Caco-2 (cell line): ENCODE measurements at regions of chr1 and their contacts with region 1.

Region 1: GRCh38 chr1:147185441-147185840 is 13.2 kb upstream of the PRKAB2 start:
- DNase-seq: peak in 1 of 2 experiments; percentile 46
- H3K4me3 ChIP-seq: no peak overlapping the region
- H3K4me3 Mint-ChIP-seq: no peak overlapping the region
- H3K27ac Mint-ChIP-seq: no peak overlapping the region
- H3K4me1 ChIP-seq: peaks cover 22% of the 10 kb centered on the region; the same call in 1 of the 2 replicates
- H3K4me1 Mint-ChIP-seq: peaks cover 16% of the 10 kb centered on the region
- H3K27me3 ChIP-seq: no peaks in the 10 kb centered on the region
- H3K27me3 Mint-ChIP-seq: no peaks in the 10 kb centered on the region
- CTCF ChIP-seq: no peak

Region 2: GRCh38 chr1:147172168-147172992 is 13.1 kb before region 1 on chr1 and contains the start of gene PRKAB2:
- CTCF ChIA-PET with region 1: no interaction called
- POLR2A ChIA-PET with region 1: no interaction called
- intact Hi-C with region 1: loop called (anchors 1 kb)
- DNase-seq: peak; percentile 96 to 98
- H3K4me3 ChIP-seq: peak within 1 kb of the TSS; percentile 98
- H3K4me3 Mint-ChIP-seq: peak within 1 kb of the TSS; percentile 96
- H3K27ac Mint-ChIP-seq: peak within 1 kb of the TSS; percentile 98
- H3K4me1 ChIP-seq: peaks cover 36% of the 10 kb centered on the region
- H3K4me1 Mint-ChIP-seq: peaks cover 34% of the 10 kb centered on the region
- H3K27me3 ChIP-seq: no peaks in the 10 kb centered on the region
- H3K27me3 Mint-ChIP-seq: no peaks in the 10 kb centered on the region
- CTCF ChIP-seq: peak; percentile 87 to 88
- total RNA-seq, gene PRKAB2: 30.1 and 31.5 TPM in 2 replicates

Region 3: GRCh38 chr1:147225193-147225730 is 39.8 kb after region 1 on chr1 and contains the start of gene FMO5:
- CTCF ChIA-PET with region 1: no interaction called
- POLR2A ChIA-PET with region 1: no interaction called
- intact Hi-C with region 1: loop called (anchors 2 kb)
- DNase-seq: peak; percentile 56 to 65
- H3K4me3 ChIP-seq: peak within 1 kb of the TSS; percentile 61
- H3K4me3 Mint-ChIP-seq: peak within 1 kb of the TSS; percentile 84
- H3K27ac Mint-ChIP-seq: peak within 1 kb of the TSS; percentile 53
- H3K4me1 ChIP-seq: no peaks in the 10 kb centered on the region
- H3K4me1 Mint-ChIP-seq: peaks cover 8% of the 10 kb centered on the region
- H3K27me3 ChIP-seq: no peaks in the 10 kb centered on the region
- H3K27me3 Mint-ChIP-seq: no peaks in the 10 kb centered on the region
- CTCF ChIP-seq: peak in 1 of 2 experiments; percentile 28
- total RNA-seq, gene FMO5: 1.9 and 2.0 TPM in 2 replicates